ENCODE measurements at regions of chr11 and their contacts with region 1.

Region 1: GRCh38 chr11:64688534-64688982 is 34.4 kb downstream of the NRXN2 start:
- DNase-seq: peak; percentile 95
- H3K4me3 ChIP-seq: peak overlapping the region; percentile 67
- H3K27ac ChIP-seq: peak overlapping the region; percentile 26
- H3K4me1 ChIP-seq: peaks cover 23% of the 10 kb centered on the region
- CTCF ChIP-seq: peak; percentile 98

Region 2: GRCh38 chr11:64723117-64723906 is 34.8 kb after region 1 on chr11 and contains the start of gene NRXN2:
- CTCF ChIA-PET with region 1: interaction called, 3 read pairs
- POLR2A ChIA-PET with region 1: no interaction called
- intact Hi-C with region 1: loop called (anchors 1 kb)
- DNase-seq: peak; percentile 92
- H3K4me3 ChIP-seq: peak within 1 kb of the TSS; percentile 74
- H3K27ac ChIP-seq: peak within 1 kb of the TSS; percentile 43
- H3K4me1 ChIP-seq: peaks cover 18% of the 10 kb centered on the region
- CTCF ChIP-seq: peak; percentile 98
- total RNA-seq, gene NRXN2: 2.2 and 2.4 TPM in 2 replicates

Region 3: GRCh38 chr11:64787526-64788320 is 99.2 kb after region 1 on chr11:
- CTCF ChIA-PET with region 1: no interaction called
- POLR2A ChIA-PET with region 1: no interaction called
- intact Hi-C with region 1: no loop called
- DNase-seq: peak; percentile 63
- H3K4me3 ChIP-seq: no peak overlapping the region
- H3K27ac ChIP-seq: peak overlapping the region; percentile 6
- H3K4me1 ChIP-seq: peaks cover 14% of the 10 kb centered on the region
- CTCF ChIP-seq: peak; percentile 98